CD4-positive, alpha-beta memory T cell (primary cell): ENCODE measurements at regions of chr1 and their contacts with region 1.

Region 1: GRCh38 chr1:16904560-16905111 is 8.9 kb downstream of the RNU1-2 start:
- DNase-seq: peak; percentile 99 to 100 (median 100)
- H3K4me3 ChIP-seq: peak overlapping the region; percentile 38 to 66
- H3K4me3 Mint-ChIP-seq: no peak overlapping the region
- H3K27ac ChIP-seq: peak overlapping the region; percentile 97
- H3K27ac Mint-ChIP-seq: no peak overlapping the region
- H3K4me1 ChIP-seq: peaks cover 35% of the 10 kb centered on the region
- H3K4me1 Mint-ChIP-seq: peaks cover 12 to 39% (median 21%) of the 10 kb centered on the region in 4 donors
- H3K27me3 ChIP-seq: no peaks in the 10 kb centered on the region
- H3K27me3 Mint-ChIP-seq: no peaks in the 10 kb centered on the region

Region 2: GRCh38 chr1:16613185-16614147 is 291.2 kb before region 1 on chr1 and contains the start of gene NBPF1:
- CTCF ChIA-PET with region 1: interaction called, 3 read pairs
- POLR2A ChIA-PET with region 1: interaction called, 15 read pairs
- intact Hi-C with region 1: no loop called
- DNase-seq: peak; percentile 77 to 89 (median 86)
- H3K4me3 ChIP-seq: peak within 1 kb of the TSS; percentile 48 to 78
- H3K4me3 Mint-ChIP-seq: no peak within 1 kb of the TSS
- H3K27ac ChIP-seq: peak within 1 kb of the TSS; percentile 25
- H3K27ac Mint-ChIP-seq: no peak within 1 kb of the TSS
- H3K4me1 ChIP-seq: peaks cover 23% of the 10 kb centered on the region
- H3K4me1 Mint-ChIP-seq: no peaks in the 10 kb centered on the region
- H3K27me3 ChIP-seq: no peaks in the 10 kb centered on the region
- H3K27me3 Mint-ChIP-seq: no peaks in the 10 kb centered on the region
- total RNA-seq, gene NBPF1: 16.7 to 17.0 TPM

Region 3: DNA sequence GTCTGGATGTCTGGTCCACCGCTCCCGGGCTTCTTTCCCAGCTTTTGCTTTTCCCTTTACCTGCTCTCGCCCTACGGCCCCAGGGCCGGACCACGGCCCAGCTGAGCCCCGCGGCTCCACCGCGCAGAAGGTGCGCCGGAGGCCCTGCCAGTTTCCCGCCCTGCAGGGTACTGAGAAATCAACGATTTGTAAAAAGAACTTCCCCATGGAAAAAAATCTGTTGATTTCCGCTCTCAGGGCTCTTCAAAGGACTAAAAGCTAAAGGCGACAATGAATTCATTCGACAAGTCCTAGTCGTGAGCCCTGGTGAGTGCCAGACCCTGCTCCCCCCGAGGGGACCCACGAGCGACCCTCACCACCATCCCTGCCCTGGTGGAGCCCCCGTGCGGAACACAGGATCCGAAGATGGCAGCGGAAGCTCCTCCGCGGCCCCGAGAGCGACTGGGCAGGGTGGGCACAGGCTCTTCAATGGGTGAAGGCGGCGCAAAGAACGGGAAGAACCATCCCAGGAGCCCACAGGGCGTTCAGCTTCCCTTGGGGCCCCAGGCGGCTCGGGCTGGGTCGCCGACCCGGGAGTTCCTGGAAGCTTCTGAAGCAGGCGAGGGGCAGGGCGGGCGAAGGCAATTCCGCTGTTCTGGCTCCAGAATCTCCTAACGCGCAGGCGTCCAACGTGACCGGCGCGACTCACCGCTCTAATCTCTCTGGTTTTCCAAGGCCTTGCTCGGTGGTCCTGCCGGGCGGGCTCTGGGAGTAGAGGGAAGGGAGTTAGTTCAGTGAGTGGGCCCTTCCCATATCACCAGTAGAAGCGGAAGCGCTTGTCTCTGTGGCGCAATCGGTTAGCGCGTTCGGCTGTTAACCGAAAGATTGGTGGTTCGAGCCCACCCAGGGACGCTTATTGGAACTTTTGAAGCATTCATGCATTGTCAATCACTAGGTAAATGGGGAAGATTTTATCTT is 15.5 kb before region 1 on chr1:
- CTCF ChIA-PET with region 1: interaction called, 6 read pairs
- POLR2A ChIA-PET with region 1: interaction called, 82 read pairs
- intact Hi-C with region 1: no loop called
- DNase-seq: peak; percentile 43 to 59 (median 50)
- H3K4me3 ChIP-seq: peak overlapping the region; percentile 60 to 67
- H3K4me3 Mint-ChIP-seq: peak overlapping the region; percentile 85 to 98 (median 96)
- H3K27ac ChIP-seq: peak overlapping the region; percentile 54
- H3K27ac Mint-ChIP-seq: peak overlapping the region; percentile 91 to 98 (median 93)
- H3K4me1 ChIP-seq: peaks cover 16% of the 10 kb centered on the region
- H3K4me1 Mint-ChIP-seq: peaks cover 0 to 33% (median 19%) of the 10 kb centered on the region in 4 donors
- H3K27me3 ChIP-seq: no peaks in the 10 kb centered on the region
- H3K27me3 Mint-ChIP-seq: peaks cover 0 to 1% of the 10 kb centered on the region in 2 donors

Region 4: GRCh38 chr1:16921391-16922185 is 17.0 kb after region 1 on chr1 and contains the start of gene CROCC:
- CTCF ChIA-PET with region 1: interaction called, 4 read pairs
- POLR2A ChIA-PET with region 1: interaction called, 28 read pairs
- intact Hi-C with region 1: no loop called
- DNase-seq: peak in 2 of 5 donors; percentile 25 to 34
- H3K4me3 ChIP-seq: peak within 1 kb of the TSS in 1 of 2 donors; percentile 9
- H3K4me3 Mint-ChIP-seq: peak within 1 kb of the TSS in 7 of 8 donors; percentile 29 to 73 (median 69)
- H3K27ac ChIP-seq: no peak within 1 kb of the TSS
- H3K27ac Mint-ChIP-seq: peak within 1 kb of the TSS; percentile 8 to 77 (median 59)
- H3K4me1 ChIP-seq: peaks cover 18% of the 10 kb centered on the region
- H3K4me1 Mint-ChIP-seq: peaks cover 9 to 47% (median 25%) of the 10 kb centered on the region in 4 donors
- H3K27me3 ChIP-seq: no peaks in the 10 kb centered on the region
- H3K27me3 Mint-ChIP-seq: no peaks in the 10 kb centered on the region
- total RNA-seq, gene CROCC: 84.9 to 91.7 TPM